HEK293 (cell line): ENCODE measurements at regions of chr6 and their contacts with region 1.

Region 1: DNA sequence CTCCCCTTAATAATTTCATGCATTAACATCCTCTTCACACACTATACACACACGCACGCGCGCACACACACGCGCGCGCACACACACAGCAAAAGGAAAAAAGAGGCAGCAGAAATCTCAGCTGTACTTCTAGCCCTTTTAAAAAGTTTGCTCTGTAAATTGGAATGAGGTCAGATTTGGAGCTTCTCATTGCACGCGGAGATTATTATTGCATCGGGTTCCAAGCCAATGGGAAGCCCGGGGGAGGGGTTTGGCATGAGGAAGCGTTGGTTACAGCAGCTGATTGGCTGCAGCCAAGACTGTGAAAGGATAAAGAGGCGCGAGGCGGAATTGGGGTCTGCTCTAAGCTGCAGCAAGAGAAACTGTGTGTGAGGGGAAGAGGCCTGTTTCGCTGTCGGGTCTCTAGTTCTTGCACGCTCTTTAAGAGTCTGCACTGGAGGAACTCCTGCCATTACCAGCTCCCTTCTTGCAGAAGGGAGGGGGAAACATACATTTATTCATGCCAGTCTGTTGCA is at the start of gene SOX4:
- H3K4me3 ChIP-seq: peak within 1 kb of the TSS; percentile 55
- H3K27ac ChIP-seq: peak within 1 kb of the TSS; percentile 99
- H3K4me1 ChIP-seq: peaks cover 12% of the 10 kb centered on the region
- CTCF ChIP-seq: no peak

Region 2: GRCh38 chr6:21208081-21208795 is 385.2 kb before region 1 on chr6:
- CTCF ChIA-PET with region 1: no interaction called
- POLR2A ChIA-PET with region 1: no interaction called
- H3K4me3 ChIP-seq: no peak overlapping the region
- H3K27ac ChIP-seq: no peak overlapping the region
- H3K4me1 ChIP-seq: no peaks in the 10 kb centered on the region
- CTCF ChIP-seq: no peak

Region 3: DNA sequence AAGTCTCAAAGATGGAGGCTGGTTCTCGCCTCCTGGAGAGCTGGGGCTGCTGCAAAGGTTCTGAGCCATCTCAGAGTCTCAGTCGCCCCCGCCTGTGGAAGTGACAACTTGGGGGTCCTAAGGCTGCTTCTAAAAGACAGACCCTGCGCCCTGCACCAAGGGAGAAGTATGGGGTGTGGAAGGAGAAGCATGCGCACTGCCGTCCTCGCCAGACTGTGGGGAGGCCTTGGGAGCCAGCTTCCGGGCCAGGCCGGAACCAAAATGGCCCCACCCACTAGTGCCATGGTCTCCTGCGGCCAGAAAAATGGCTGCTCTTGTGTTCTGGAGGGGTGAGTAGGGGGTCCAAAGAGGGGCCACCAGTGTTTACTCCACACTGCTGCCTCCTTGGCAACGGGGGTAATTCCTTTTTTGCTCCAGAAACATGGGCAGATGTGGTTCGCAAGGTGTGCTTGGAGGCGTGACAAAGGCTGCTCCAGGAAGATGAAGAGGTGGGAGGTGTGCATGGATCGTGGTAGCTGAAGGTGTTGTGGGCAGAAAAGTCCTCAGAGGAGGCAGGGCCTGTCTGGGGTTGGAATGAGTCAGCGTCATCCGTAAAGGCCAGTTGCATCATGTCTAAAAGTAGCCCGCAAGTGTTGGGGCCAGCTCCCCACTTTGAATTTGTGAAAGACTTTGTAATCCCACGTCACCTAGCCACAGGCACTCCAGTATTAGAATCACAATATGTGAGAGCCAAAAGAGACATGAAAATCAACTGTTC is 329.8 kb before region 1 on chr6:
- CTCF ChIA-PET with region 1: interaction called, 9 read pairs
- POLR2A ChIA-PET with region 1: interaction called, 21 read pairs
- H3K4me3 ChIP-seq: no peak overlapping the region
- H3K27ac ChIP-seq: peak overlapping the region; percentile 98
- H3K4me1 ChIP-seq: peaks cover 17% of the 10 kb centered on the region
- CTCF ChIP-seq: no peak

Region 4: GRCh38 chr6:21715180-21715579 is 121.7 kb after region 1 on chr6:
- CTCF ChIA-PET with region 1: no interaction called
- POLR2A ChIA-PET with region 1: interaction called, 15 read pairs
- H3K4me3 ChIP-seq: no peak overlapping the region
- H3K27ac ChIP-seq: no peak overlapping the region
- H3K4me1 ChIP-seq: no peaks in the 10 kb centered on the region
- CTCF ChIP-seq: no peak

Region 5: DNA sequence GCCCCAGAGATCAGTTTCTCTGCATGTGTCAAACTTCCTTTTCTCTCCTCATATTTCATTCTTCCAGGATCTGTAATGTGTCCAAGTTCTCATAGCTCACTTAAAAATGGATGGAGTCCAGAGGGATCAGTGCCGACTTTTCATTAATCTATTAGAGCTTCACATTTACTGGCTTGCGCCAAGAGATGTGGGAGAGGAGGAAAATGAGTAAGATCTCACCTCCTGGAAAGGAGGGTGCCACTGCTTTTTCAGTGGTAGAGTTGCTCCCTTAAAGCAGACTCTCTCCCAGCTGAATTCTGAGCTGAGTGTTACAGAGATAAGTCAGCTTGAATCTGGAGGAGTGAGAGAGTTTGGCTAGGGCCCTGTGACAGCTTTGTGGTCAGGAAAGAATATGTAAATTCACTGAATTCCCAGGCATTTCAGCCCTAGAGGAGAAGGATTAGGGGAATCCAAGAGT is 176.0 kb after region 1 on chr6:
- CTCF ChIA-PET with region 1: interaction called, 4 read pairs
- POLR2A ChIA-PET with region 1: interaction called, 30 read pairs
- H3K4me3 ChIP-seq: no peak overlapping the region
- H3K27ac ChIP-seq: peak overlapping the region; percentile 85
- H3K4me1 ChIP-seq: peaks cover 39% of the 10 kb centered on the region
- CTCF ChIP-seq: no peak

Region 6: DNA sequence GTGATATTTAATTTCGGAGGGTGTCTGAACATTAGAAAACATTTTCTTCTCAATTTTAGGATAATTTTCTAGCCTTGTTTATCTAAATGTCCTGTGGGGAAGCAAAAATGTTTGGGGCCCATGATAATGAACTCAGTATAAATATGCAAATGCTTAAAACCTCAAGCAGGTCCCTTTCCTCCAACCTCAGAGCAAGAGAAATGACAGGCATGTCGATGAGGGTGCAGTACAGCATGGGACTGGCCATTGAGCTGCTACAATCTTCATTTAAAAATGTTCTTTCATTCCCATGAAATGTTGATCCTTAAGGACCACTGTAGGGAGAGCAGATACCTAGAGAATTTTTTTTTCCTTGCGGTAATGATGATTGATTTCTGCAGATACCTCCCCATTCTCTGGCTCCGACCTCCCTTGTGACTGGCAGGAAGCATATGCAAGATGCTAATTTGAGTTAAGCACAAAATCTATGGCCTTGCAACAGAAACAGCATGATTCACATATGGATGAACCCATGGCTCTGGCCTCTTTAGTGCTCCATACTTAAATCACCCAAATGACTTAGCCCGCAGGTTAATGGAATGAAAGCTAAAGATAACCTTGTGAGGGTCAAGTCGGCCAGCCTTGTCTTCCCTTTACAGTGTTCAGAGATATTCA is 243.4 kb after region 1 on chr6:
- CTCF ChIA-PET with region 1: no interaction called
- POLR2A ChIA-PET with region 1: no interaction called
- H3K4me3 ChIP-seq: no peak overlapping the region
- H3K27ac ChIP-seq: no peak overlapping the region
- H3K4me1 ChIP-seq: peaks cover 12% of the 10 kb centered on the region
- CTCF ChIP-seq: no peak

Region 7: DNA sequence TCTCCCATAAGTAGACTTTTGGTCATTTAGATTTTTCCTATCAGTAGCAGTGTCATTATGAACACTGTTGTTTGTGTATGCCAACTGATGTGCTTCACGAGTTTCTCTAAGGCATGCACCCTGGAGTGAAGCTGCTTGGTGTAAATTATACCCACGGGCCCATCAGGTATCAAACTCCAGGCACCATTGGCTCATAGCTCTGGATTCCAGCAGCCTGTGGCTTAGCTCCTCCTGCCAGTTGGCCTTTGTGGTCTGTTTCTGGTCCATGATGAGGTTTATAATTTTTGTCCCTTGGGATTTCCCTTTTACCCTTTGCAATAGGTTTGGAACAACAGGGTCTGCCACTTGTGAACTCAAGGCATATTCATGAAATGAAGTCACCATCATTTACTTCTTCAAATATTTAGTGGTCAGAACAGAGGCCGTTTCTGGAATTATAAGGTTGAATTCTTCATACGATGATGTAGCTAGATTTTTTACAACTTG is 352.9 kb after region 1 on chr6:
- CTCF ChIA-PET with region 1: interaction called, 3 read pairs
- POLR2A ChIA-PET with region 1: interaction called, 53 read pairs
- H3K4me3 ChIP-seq: no peak overlapping the region
- H3K27ac ChIP-seq: no peak overlapping the region; the same call in 1 of the 2 replicates
- H3K4me1 ChIP-seq: peaks cover 36% of the 10 kb centered on the region
- CTCF ChIP-seq: no peak

Region 8: GRCh38 chr6:22145823-22146677 is 552.6 kb after region 1 on chr6:
- CTCF ChIA-PET with region 1: no interaction called
- POLR2A ChIA-PET with region 1: interaction called, 19 read pairs
- H3K4me3 ChIP-seq: peak overlapping the region; percentile 12
- H3K27ac ChIP-seq: peak overlapping the region; percentile 42; the same call in 1 of the 2 replicates
- H3K4me1 ChIP-seq: peaks cover 23% of the 10 kb centered on the region
- CTCF ChIP-seq: no peak; the same call in 1 of the 2 replicates